ENCODE measurements at regions of chr6 and their contacts with region 1.

Region 1: DNA sequence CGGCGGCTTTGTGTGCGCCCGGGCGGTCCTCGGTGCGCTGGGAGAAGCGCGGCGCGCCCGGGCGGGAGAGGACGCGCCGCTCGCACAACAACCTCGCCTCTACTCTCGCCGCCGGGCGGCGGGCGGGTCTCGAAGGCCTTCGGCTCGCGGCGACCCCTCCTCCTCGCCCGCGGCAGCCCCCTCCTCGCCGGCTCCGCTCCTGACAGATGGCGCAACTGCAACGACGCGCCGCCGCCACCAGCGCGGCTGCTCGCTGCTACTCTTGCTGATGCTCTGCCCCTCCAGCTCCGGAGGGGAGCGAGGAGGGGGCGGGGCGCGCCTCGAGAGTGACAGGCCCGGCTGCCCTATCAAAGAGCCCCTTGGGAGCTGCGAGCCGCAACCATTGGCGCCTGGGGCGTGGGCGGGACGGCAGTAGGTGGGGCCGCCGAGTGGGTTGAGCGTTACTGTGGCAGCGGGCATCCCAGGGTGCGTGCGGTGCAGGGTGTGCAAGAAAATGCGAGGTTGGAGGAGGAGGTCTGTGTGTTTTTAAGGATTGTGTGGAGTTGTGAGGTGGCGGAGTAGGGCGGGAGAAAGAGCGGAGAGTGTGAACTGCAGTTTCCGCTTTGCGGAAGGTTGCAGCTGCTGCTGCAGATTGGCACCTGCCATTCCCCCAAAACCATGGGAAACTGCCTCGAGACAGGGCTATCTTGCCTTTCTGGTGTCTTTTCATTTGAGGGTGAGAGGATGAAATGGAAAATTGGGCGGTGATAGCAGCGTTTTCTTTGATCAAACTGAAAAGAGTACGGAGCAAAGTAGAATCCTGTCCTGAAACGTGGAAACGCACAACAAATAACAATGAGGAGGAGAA is at the start of gene FYN:
- DNase-seq: peak; percentile 97 to 99 (median 99)
- ATAC-seq: peak; percentile 99
- H3K4me3 ChIP-seq: peak within 1 kb of the TSS; percentile 58
- H3K27ac ChIP-seq: no peak within 1 kb of the TSS
- H3K4me1 ChIP-seq: peaks cover 20 to 30% of the 10 kb centered on the region in 2 experiments
- H3K27me3 ChIP-seq: peaks cover 5 to 9% of the 10 kb centered on the region in 2 experiments; a peak in 3 of 5 replicates
- CTCF ChIP-seq: peak in 2 of 3 experiments; percentile 30 to 42; a peak in 4 of 6 replicates
- EP300 ChIP-seq: no peak
- POLR2A ChIP-seq: no peak
- RAD21 ChIP-seq: no peak; a peak in 1 of 4 replicates
- polyA plus RNA-seq, gene FYN: 2.9 to 5.0 TPM

Region 2: DNA sequence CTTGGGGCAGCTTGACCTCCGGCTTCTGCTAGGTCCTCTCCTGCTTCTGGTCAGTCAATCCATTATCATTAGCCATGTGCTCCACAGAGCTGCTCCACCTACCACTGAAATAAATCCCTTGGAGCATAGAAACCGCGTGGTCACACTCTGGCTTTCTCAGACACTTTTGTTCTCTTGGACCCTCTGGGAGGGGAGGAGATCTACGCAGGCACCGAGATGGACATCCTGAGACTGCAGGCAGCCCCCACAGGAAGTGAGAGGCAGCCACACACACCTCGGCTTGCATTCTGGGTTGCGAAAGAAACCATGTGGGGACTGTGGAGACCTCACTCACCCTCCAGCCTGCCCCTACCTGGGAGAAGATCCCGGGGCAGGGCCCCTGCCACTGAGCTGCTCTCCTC is 79.7 kb before region 1 on chr6:
- CTCF ChIA-PET with region 1: no interaction called
- POLR2A ChIA-PET with region 1: no interaction called
- in situ Hi-C with region 1: no loop called
- intact Hi-C with region 1: no loop called
- DNase-seq: peak in 2 of 4 experiments; percentile 27 to 48
- ATAC-seq: peak; percentile 76
- H3K4me3 ChIP-seq: no peak overlapping the region
- H3K27ac ChIP-seq: peak overlapping the region; percentile 37; the same call in 1 of the 3 replicates
- H3K4me1 ChIP-seq: peaks cover 0 to 17% of the 10 kb centered on the region in 2 experiments; a peak in 3 of 5 replicates
- H3K27me3 ChIP-seq: no peaks in the 10 kb centered on the region; a peak in 1 of 5 replicates
- CTCF ChIP-seq: no peak
- EP300 ChIP-seq: no peak
- POLR2A ChIP-seq: peak; percentile 45; the same call in 1 of the 2 replicates
- RAD21 ChIP-seq: no peak

Region 3: GRCh38 chr6:111804627-111805235 is 68.7 kb before region 1 on chr6:
- CTCF ChIA-PET with region 1: no interaction called
- POLR2A ChIA-PET with region 1: no interaction called
- in situ Hi-C with region 1: no loop called
- intact Hi-C with region 1: loop called (anchors 5 kb)
- DNase-seq: peak; percentile 69 to 89 (median 76)
- ATAC-seq: peak; percentile 85
- H3K4me3 ChIP-seq: no peak overlapping the region
- H3K27ac ChIP-seq: peak overlapping the region; percentile 25; the same call in 1 of the 3 replicates
- H3K4me1 ChIP-seq: peaks cover 0 to 26% of the 10 kb centered on the region in 2 experiments; a peak in 3 of 5 replicates
- H3K27me3 ChIP-seq: no peaks in the 10 kb centered on the region; a peak in 2 of 5 replicates
- CTCF ChIP-seq: no peak; a peak in 1 of 6 replicates
- EP300 ChIP-seq: peak; percentile 83
- POLR2A ChIP-seq: no peak
- RAD21 ChIP-seq: peak; percentile 30 to 37; a peak in 3 of 4 replicates

Region 4: DNA sequence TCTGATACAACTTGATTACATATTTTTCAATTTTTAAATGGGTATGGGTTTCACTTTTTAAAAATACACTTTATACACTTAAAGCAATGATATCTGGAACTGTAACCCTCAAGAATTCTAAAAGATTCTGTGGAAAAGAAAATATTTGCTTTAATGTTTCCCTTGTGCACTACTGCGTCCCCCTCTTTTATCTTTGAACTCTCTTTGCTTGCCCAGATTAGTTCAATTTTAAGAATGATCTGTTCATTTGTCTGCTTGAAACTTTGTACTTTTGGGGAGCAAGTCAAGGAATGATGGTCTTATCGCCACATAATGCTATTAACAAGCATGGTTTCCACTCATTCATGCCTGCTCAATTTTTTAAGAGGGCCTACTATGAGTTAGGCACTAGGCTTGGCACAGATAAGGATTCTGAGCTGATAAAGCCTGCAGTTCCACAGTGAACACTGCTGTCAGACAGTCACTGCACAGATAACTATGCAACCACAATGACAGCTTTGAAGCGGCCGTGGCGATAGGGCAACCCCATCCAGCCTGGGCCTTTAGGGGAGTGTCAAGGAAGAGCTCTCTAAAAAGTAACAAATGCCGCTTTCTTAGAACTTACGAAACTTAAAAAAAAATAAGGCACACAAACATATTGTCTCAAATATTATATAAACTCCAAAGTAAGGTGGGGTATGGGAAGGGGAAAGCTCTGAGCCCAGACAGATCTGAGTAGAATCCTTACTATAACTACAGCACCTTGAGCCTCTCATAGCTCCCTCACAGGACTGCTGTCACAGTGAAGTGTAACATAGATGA is 29.9 kb before region 1 on chr6:
- CTCF ChIA-PET with region 1: no interaction called
- POLR2A ChIA-PET with region 1: interaction called, 4 read pairs
- in situ Hi-C with region 1: no loop called
- intact Hi-C with region 1: loop called (anchors 1 kb)
- DNase-seq: peak; percentile 79 to 88 (median 84)
- ATAC-seq: peak; percentile 96
- H3K4me3 ChIP-seq: no peak overlapping the region
- H3K27ac ChIP-seq: peak overlapping the region; percentile 37; the same call in 2 of the 3 replicates
- H3K4me1 ChIP-seq: peaks cover 17 to 40% of the 10 kb centered on the region in 2 experiments; a peak in 4 of 5 replicates
- H3K27me3 ChIP-seq: no peaks in the 10 kb centered on the region
- CTCF ChIP-seq: no peak
- EP300 ChIP-seq: peak; percentile 88
- POLR2A ChIP-seq: no peak
- RAD21 ChIP-seq: 0 out of 4 replicates have a peak, but pooled peaks of 1 of the 2 experiments have one; percentile 8

Region 5: GRCh38 chr6:112043032-112044007 is 169.9 kb after region 1 on chr6:
- CTCF ChIA-PET with region 1: no interaction called
- POLR2A ChIA-PET with region 1: no interaction called
- in situ Hi-C with region 1: no loop called
- intact Hi-C with region 1: loop called (anchors 5 kb)
- DNase-seq: peak; percentile 87 to 93 (median 92)
- ATAC-seq: peak; percentile 97
- H3K4me3 ChIP-seq: peak overlapping the region; percentile 49
- H3K27ac ChIP-seq: peak overlapping the region; percentile 26
- H3K4me1 ChIP-seq: peaks cover 0 to 5% of the 10 kb centered on the region in 2 experiments; a peak in 1 of 5 replicates
- H3K27me3 ChIP-seq: peaks cover 5 to 15% of the 10 kb centered on the region in 2 experiments; a peak in 4 of 5 replicates
- CTCF ChIP-seq: peak; percentile 92 to 96 (median 95)
- EP300 ChIP-seq: peak; percentile 56
- POLR2A ChIP-seq: no peak; the same call in 1 of the 2 replicates
- RAD21 ChIP-seq: peak; percentile 86 to 89

Region 6: DNA sequence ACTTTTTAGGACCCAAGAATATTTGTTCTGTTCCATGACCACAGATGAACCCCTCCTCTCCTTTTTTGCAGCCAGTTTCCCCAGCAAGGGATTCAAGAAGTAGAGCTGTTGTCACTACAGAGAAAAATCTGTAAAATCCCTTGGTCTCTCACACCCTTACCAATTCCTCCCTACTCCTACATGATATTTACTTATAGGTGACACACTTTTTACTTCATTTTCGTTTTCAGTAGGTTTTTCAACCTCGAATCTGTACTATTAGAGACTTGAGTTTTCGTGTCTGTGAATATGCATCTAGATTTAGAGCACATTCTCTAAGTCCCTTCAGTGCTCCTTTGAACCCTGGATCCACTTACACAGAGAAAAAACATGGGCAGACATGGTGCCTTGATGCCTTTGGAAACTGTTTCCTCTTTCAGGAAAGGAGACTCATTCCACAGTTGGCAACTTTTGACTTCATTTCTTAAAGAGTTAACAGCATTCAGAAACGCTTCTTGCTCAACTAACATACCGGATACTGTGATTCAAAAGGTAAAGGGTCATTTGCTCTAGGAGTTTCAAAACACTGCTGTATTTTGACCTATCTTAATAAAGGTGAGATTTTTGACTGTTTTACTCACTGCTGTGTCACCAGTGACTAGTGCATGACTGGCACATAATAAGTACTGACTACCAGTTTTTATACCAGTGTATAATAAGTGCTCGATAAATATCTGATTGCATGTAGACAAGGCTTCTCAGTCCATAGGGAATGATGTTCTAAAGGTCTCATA is 330.4 kb after region 1 on chr6:
- CTCF ChIA-PET with region 1: no interaction called
- POLR2A ChIA-PET with region 1: no interaction called
- in situ Hi-C with region 1: no loop called
- intact Hi-C with region 1: no loop called
- DNase-seq: no peak
- ATAC-seq: no peak
- H3K4me3 ChIP-seq: no peak overlapping the region
- H3K27ac ChIP-seq: no peak overlapping the region
- H3K4me1 ChIP-seq: no peaks in the 10 kb centered on the region
- H3K27me3 ChIP-seq: no peaks in the 10 kb centered on the region
- CTCF ChIP-seq: no peak
- EP300 ChIP-seq: no peak
- POLR2A ChIP-seq: no peak
- RAD21 ChIP-seq: no peak

Measured in K562 (cell line).